GM12878 (cell line): ENCODE measurements at regions of chr2 and their contacts with region 1.

Region 1: DNA sequence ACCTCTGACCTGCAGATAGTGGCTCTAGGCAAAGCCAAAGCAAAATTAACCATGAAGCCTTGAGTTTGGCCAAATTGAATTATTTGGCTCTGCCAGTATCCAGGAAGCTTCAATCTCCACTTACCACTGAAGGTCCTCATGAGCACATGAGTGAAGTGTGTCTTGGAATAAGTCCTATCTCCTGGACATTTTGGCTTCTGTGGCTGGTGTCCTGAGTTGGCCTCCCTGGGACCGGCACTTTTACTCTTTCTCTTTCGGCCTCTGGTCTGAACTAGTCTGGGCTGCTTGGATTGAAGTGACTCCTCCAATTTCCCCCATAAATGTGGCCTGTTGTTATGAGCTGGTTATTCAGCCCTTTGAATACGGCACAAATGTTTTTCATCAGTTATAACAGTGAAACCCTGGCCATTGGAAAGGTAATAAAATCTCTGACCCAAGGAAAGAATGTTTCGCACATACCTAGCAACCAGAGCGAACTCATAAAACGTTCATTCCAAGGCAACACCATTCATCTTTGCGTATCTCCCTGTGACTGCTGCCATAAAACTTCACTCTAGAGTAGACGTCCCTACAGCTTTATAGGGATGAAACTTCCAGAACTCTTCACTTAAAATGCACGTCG is 216.4 kb downstream of the LPIN1 start:
- DNase-seq: no peak
- ATAC-seq: no peak
- H3K4me3 ChIP-seq: no peak overlapping the region
- H3K27ac ChIP-seq: no peak overlapping the region
- H3K4me1 ChIP-seq: no peaks in the 10 kb centered on the region
- H3K27me3 ChIP-seq: no peaks in the 10 kb centered on the region
- CTCF ChIP-seq: no peak
- EP300 ChIP-seq: no peak
- POLR2A ChIP-seq: no peak
- RAD21 ChIP-seq: no peak

Region 2: GRCh38 chr2:11945139-11946126 is 17.4 kb before region 1 on chr2:
- CTCF ChIA-PET with region 1: no interaction called
- POLR2A ChIA-PET with region 1: no interaction called
- RAD21 ChIA-PET with region 1: no interaction called
- SMC1A ChIA-PET with region 1: interaction called, 17 read pairs
- in situ Hi-C with region 1: no loop called
- intact Hi-C with region 1: no loop called
- DNase-seq: peak; percentile 50
- ATAC-seq: peak; percentile 90
- H3K4me3 ChIP-seq: no peak overlapping the region
- H3K27ac ChIP-seq: peak overlapping the region; percentile 48; the same call in 1 of the 2 replicates
- H3K4me1 ChIP-seq: peaks cover 13% of the 10 kb centered on the region
- H3K27me3 ChIP-seq: no peaks in the 10 kb centered on the region
- CTCF ChIP-seq: no peak
- EP300 ChIP-seq: no peak
- POLR2A ChIP-seq: no peak
- RAD21 ChIP-seq: no peak

Region 3: DNA sequence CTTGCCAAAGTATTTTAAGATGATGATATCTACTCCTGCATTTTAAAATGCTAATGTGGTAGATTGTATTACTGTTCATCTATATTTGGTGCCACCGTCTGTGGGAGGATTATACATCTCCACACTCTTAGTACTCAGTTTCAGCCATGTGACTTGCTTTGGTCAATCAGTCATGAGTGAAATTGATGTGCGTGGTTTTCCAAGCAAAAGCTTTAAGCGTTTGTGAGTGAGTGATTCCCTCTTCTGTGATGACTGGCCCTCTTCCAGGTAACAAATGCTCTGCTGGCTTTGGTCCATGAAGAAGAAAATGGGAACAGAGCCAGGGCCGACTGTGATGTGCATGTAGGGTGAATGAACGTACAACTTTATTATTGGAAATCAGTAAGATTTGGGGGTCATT is 114.0 kb after region 1 on chr2:
- CTCF ChIA-PET with region 1: no interaction called
- POLR2A ChIA-PET with region 1: no interaction called
- RAD21 ChIA-PET with region 1: no interaction called
- SMC1A ChIA-PET with region 1: no interaction called
- in situ Hi-C with region 1: no loop called
- intact Hi-C with region 1: no loop called
- DNase-seq: no peak
- ATAC-seq: peak; percentile 50
- H3K4me3 ChIP-seq: no peak overlapping the region
- H3K27ac ChIP-seq: no peak overlapping the region
- H3K4me1 ChIP-seq: peaks cover 13% of the 10 kb centered on the region
- H3K27me3 ChIP-seq: no peaks in the 10 kb centered on the region
- CTCF ChIP-seq: no peak
- EP300 ChIP-seq: no peak
- POLR2A ChIP-seq: no peak
- RAD21 ChIP-seq: no peak

Region 4: GRCh38 chr2:13156916-13157315 is 1194.1 kb after region 1 on chr2:
- CTCF ChIA-PET with region 1: no interaction called
- POLR2A ChIA-PET with region 1: no interaction called
- RAD21 ChIA-PET with region 1: no interaction called
- SMC1A ChIA-PET with region 1: no interaction called
- in situ Hi-C with region 1: no loop called
- intact Hi-C with region 1: no loop called
- DNase-seq: no peak
- ATAC-seq: no peak
- H3K4me3 ChIP-seq: no peak overlapping the region
- H3K27ac ChIP-seq: no peak overlapping the region
- H3K4me1 ChIP-seq: no peaks in the 10 kb centered on the region
- H3K27me3 ChIP-seq: no peaks in the 10 kb centered on the region
- CTCF ChIP-seq: no peak
- EP300 ChIP-seq: no peak
- POLR2A ChIP-seq: no peak
- RAD21 ChIP-seq: no peak